ENCODE measurements at regions of chr4 and their contacts with region 1.

Region 1: GRCh38 chr4:48779998-48780742 is at the start of gene FRYL:
- DNase-seq: peak; percentile 86
- ATAC-seq: peak; percentile 91
- H3K4me3 Mint-ChIP-seq: peak within 1 kb of the TSS; percentile 94
- H3K27ac Mint-ChIP-seq: peak within 1 kb of the TSS; percentile 87
- H3K4me1 Mint-ChIP-seq: peaks cover 41% of the 10 kb centered on the region
- H3K27me3 Mint-ChIP-seq: no peaks in the 10 kb centered on the region
- CTCF ChIP-seq: no peak
- total RNA-seq, gene FRYL: 82.4 and 91.5 TPM in 2 replicates

Region 2: DNA sequence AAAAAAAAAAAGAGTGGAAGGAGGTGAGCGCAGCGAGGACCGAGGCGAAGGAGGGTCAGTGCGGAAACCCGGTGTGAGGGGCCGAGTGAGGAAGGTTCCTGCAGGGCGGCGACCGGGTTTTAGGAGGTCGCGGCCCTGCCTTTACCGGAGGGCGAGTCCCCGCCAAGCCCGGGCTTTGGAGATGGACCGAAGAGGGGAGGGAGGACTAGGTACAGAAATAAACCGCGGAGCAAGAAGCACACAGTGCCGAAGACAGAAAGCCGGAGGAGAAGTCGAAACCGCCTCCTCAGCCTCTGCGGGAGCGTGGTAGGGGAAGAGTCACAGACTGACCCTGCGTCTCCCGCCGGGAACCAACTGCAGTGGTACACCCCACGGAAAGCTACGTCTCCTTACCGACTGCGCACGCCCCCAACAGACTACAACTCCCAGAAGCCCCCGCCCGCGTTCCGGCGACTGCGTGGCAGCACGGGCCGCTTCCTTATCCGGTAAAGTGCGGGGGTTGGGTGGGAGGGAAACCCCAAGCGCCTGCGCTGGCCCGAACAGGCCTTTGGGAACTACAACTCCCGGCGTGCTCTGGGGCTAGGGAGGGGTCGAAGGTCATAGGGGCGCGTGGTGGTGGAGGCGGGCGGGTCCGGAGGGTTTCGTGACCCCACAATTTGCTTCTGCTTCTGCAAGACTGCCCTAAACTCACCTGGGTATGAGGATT is 865.8 kb before region 1 on chr4 and contains the start of gene NFXL1:
- CTCF ChIA-PET with region 1: no interaction called
- POLR2A ChIA-PET with region 1: no interaction called
- intact Hi-C with region 1: loop called (anchors 1 kb)
- DNase-seq: peak; percentile 90
- ATAC-seq: peak; percentile 96
- H3K4me3 Mint-ChIP-seq: peak within 1 kb of the TSS; percentile 98
- H3K27ac Mint-ChIP-seq: peak within 1 kb of the TSS; percentile 92
- H3K4me1 Mint-ChIP-seq: peaks cover 31% of the 10 kb centered on the region
- H3K27me3 Mint-ChIP-seq: no peaks in the 10 kb centered on the region
- CTCF ChIP-seq: no peak
- total RNA-seq, gene NFXL1: 10.0 and 11.1 TPM in 2 replicates

Region 3: DNA sequence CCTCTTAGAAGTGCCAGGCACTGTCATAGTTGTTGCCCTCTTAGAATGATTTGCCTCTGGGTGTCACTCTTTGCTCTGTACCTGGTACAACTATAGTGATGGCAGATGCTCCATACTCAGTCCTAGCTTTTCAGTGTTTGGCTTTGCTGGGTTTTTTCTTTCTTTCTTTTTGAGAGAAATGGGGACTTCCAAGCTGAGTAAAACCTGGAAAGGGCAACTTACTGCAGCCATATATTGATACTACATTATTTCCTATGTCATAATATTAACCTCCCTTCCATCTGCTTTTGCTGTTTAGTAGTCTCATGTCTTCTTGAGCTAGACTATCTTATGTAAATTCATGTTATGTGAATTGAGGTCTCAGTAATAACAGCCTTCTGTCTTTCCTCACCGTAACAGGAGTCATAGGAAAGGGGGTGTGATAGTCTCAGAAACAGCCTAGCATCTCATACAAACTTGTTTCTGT is 714.5 kb before region 1 on chr4:
- CTCF ChIA-PET with region 1: no interaction called
- POLR2A ChIA-PET with region 1: no interaction called
- intact Hi-C with region 1: no loop called
- DNase-seq: no peak
- ATAC-seq: no peak
- H3K4me3 Mint-ChIP-seq: no peak overlapping the region
- H3K27ac Mint-ChIP-seq: no peak overlapping the region
- H3K4me1 Mint-ChIP-seq: no peaks in the 10 kb centered on the region
- H3K27me3 Mint-ChIP-seq: peaks cover 12% of the 10 kb centered on the region
- CTCF ChIP-seq: no peak

Region 4: DNA sequence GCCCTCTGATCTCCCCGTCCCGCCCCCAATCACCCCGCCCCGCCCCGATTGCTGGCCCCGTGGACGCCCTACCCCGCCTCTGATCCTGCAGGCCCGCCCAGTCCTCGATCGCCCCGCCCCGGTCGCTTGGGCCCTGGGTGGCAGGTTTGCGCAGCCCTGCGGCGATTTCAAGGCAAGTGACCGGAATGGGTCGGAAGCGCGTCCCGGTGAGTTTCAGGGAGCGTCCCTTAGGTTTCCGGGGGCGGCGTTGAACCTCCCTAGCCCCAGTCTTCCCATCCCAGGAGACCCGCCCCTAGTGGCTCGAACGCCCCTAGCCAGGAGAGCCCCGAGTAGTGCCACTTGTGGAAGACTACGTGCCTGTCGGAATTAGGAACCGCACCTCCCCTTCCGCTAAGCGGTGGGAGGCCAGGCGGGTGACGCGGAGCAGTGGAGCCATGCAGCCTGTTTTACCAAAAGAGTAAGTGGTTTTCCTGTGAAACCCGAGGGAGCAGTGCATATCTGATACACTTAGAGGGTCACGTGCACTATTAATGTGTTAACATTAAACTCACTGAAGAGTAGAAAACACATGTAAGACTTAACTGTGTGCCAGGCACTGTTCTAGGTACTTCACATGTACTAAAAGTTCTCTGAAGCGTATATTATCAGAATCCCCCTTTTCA is 510.2 kb before region 1 on chr4:
- CTCF ChIA-PET with region 1: no interaction called
- POLR2A ChIA-PET with region 1: no interaction called
- intact Hi-C with region 1: loop called (anchors 2 kb)
- DNase-seq: peak; percentile 88
- ATAC-seq: peak; percentile 90
- H3K4me3 Mint-ChIP-seq: peak overlapping the region; percentile 96
- H3K27ac Mint-ChIP-seq: peak overlapping the region; percentile 92
- H3K4me1 Mint-ChIP-seq: peaks cover 39% of the 10 kb centered on the region
- H3K27me3 Mint-ChIP-seq: no peaks in the 10 kb centered on the region
- CTCF ChIP-seq: no peak

Region 5: GRCh38 chr4:48766131-48766792 is 13.9 kb before region 1 on chr4:
- CTCF ChIA-PET with region 1: no interaction called
- POLR2A ChIA-PET with region 1: interaction called, 10 read pairs
- intact Hi-C with region 1: no loop called
- DNase-seq: no peak
- ATAC-seq: peak; percentile 37
- H3K4me3 Mint-ChIP-seq: no peak overlapping the region
- H3K27ac Mint-ChIP-seq: no peak overlapping the region
- H3K4me1 Mint-ChIP-seq: peaks cover 43% of the 10 kb centered on the region
- H3K27me3 Mint-ChIP-seq: no peaks in the 10 kb centered on the region
- CTCF ChIP-seq: no peak

Region 6: DNA sequence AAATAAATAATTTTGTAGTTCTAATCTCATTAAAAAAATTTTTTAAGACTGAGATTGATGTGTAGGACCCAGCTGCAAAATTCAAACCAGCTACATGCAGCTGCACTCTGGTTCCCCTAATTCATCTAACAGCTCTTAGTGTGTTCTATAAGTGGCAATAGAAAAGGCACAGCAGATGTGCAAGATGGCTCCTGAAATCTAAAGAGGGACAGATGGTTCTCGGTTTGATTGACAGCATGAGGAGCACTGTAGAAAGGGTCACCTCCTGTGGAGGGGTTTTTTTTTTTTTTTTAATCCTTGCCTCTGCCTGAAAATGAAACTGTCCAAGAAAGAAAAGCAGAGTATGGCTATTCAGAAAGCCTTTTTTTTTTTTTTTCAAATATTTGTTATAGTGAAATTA is 33.8 kb after region 1 on chr4:
- CTCF ChIA-PET with region 1: no interaction called
- POLR2A ChIA-PET with region 1: interaction called, 10 read pairs
- intact Hi-C with region 1: no loop called
- DNase-seq: no peak
- ATAC-seq: no peak
- H3K4me3 Mint-ChIP-seq: no peak overlapping the region
- H3K27ac Mint-ChIP-seq: no peak overlapping the region
- H3K4me1 Mint-ChIP-seq: peaks cover 23% of the 10 kb centered on the region
- H3K27me3 Mint-ChIP-seq: no peaks in the 10 kb centered on the region
- CTCF ChIP-seq: no peak

Region 7: DNA sequence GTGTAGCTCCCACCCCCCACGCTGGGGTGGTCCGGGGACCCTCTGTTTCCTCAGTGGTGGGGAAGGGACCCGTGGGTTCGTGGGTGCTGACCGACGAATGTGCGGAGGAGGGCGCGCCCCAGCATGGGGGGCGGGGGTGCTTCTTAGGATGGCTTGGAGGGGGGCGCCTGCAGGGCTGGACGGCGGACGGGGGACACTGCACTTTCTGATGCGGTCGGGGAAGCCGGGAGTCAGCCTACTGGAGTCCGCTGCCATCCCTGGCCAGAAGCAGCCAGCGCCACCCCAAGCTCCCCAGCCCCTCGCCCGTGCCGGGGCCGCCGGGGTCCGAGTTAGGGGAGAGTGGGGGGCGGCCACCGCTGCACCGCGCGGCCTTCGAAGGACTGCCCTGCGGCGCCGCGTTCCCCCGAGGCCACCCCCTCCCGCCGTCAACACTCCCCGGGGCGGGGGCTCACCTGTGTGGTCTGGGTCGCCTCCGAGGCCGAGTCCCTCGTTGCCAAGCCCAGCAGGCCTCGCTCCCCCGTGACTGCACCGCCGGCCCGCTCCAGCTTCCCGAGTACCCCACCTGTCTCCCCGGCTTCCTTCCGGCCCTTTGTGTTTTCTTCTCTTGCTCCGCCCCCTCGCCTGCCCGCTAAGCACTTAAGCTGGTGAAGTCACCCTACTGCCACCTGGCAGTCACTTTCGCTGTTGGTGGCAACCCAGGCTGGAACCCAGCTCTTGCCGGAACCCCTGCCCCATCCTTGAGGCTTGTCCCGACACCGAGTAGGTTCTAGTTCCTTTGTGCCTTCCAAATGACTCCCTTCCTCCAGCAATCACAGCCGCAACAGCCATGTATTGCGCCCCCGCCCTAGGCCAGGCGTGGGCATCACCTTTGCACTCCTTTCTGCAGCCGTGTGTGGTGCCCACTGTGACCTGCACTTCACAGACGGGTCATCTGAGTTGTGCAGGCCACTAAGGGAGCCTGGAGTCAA is 126.3 kb after region 1 on chr4 and contains the start of gene OCIAD2:
- CTCF ChIA-PET with region 1: interaction called, 7 read pairs
- POLR2A ChIA-PET with region 1: interaction called, 17 read pairs
- intact Hi-C with region 1: loop called (anchors 1 kb)
- DNase-seq: peak; percentile 65
- ATAC-seq: peak; percentile 97
- H3K4me3 Mint-ChIP-seq: peak within 1 kb of the TSS; percentile 97
- H3K27ac Mint-ChIP-seq: peak within 1 kb of the TSS; percentile 86
- H3K4me1 Mint-ChIP-seq: peaks cover 29% of the 10 kb centered on the region
- H3K27me3 Mint-ChIP-seq: no peaks in the 10 kb centered on the region
- CTCF ChIP-seq: no peak
- total RNA-seq, gene OCIAD2: 37.0 and 38.3 TPM in 2 replicates

Measured in activated B cell treated with CpG ODN at 0.5 μM for 24 hours (primary cell).